Aorta (tissue), 5 donors: ENCODE measurements at regions of chr4 and their contacts with region 1.

Region 1: DNA sequence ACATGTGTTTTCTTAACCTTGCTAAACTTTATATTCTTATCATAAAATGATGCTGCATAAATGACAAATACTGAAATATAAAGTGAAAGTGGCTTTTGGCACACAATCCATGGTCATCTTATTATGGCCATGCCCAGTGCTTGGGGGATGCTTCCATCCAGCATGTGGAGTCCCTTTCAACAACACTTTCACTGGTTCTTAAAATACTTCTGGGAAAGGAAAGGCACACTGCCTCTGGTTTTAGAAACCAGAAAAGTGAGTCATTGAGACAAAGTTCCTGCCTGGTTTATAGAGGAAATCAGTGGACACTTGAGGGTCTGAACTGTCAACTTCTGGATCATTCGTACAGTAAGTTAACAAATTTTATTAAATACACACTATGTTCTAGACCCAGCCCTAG is 248.0 kb upstream of the ADAMTS3 start:
- DNase-seq: peak in 1 of 2 donors; percentile 44
- ATAC-seq: no peak
- H3K4me3 ChIP-seq: no peak overlapping the region
- H3K27ac ChIP-seq: peak overlapping the region; percentile 3 to 67
- H3K4me1 ChIP-seq: peaks cover 3% of the 10 kb centered on the region in 2 donors
- H3K27me3 ChIP-seq: no peaks in the 10 kb centered on the region

Region 2: GRCh38 chr4:71625005-71625404 is 1192.0 kb before region 1 on chr4:
- intact Hi-C with region 1: no loop called
- DNase-seq: no peak
- ATAC-seq: no peak
- H3K4me3 ChIP-seq: no peak overlapping the region
- H3K27ac ChIP-seq: no peak overlapping the region
- H3K4me1 ChIP-seq: no peaks in the 10 kb centered on the region
- H3K27me3 ChIP-seq: no peaks in the 10 kb centered on the region

Region 3: GRCh38 chr4:72896515-72896914 is 79.5 kb after region 1 on chr4:
- intact Hi-C with region 1: loop called in 1 of 2 experiments (anchors 5 kb)
- DNase-seq: no peak
- ATAC-seq: peak; percentile 92
- H3K4me3 ChIP-seq: no peak overlapping the region
- H3K27ac ChIP-seq: peak overlapping the region in 1 of 2 donors; percentile 76
- H3K4me1 ChIP-seq: peaks cover 2 to 10% of the 10 kb centered on the region in 2 donors
- H3K27me3 ChIP-seq: no peaks in the 10 kb centered on the region